Esophagus squamous epithelium (tissue), 5 donors: ENCODE measurements at regions of chr2 and their contacts with region 1.

Region 1: DNA sequence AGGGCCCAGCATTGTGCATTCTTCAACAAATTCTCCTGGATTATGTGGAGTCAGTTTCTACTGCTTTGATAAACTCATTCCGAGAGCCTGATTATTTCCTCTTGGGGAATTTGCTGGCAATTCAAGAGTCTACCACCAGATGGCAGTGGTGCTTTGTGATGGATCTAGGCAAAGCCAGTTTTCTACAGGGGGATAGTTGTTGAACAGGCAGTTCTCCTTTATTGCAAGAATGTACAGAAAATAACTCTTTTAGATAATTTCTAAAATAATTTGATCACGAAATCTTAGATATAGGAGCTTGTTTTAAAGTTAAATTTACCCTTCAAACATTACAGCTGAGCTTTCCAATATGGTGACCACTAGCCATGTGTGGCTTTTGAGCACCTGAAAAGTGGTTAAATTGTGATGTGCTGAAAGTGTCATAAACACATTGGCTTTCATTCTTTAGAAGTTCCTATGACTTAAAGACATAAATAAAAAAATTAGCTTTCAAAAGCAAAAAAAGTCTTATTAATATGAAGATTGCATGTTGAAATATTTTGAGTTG is 66.7 kb upstream of the HAAO start:
- DNase-seq: no peak
- H3K4me3 ChIP-seq: no peak overlapping the region
- H3K27ac ChIP-seq: peak overlapping the region in 3 of 4 donors; percentile 30 to 90 (median 83)
- H3K4me1 ChIP-seq: peaks cover 24 to 62% (median 31%) of the 10 kb centered on the region in 3 donors
- H3K27me3 ChIP-seq: no peaks in the 10 kb centered on the region
- CTCF ChIP-seq: peak; percentile 89 to 97 (median 93)
- POLR2A ChIP-seq: no peak

Region 2: DNA sequence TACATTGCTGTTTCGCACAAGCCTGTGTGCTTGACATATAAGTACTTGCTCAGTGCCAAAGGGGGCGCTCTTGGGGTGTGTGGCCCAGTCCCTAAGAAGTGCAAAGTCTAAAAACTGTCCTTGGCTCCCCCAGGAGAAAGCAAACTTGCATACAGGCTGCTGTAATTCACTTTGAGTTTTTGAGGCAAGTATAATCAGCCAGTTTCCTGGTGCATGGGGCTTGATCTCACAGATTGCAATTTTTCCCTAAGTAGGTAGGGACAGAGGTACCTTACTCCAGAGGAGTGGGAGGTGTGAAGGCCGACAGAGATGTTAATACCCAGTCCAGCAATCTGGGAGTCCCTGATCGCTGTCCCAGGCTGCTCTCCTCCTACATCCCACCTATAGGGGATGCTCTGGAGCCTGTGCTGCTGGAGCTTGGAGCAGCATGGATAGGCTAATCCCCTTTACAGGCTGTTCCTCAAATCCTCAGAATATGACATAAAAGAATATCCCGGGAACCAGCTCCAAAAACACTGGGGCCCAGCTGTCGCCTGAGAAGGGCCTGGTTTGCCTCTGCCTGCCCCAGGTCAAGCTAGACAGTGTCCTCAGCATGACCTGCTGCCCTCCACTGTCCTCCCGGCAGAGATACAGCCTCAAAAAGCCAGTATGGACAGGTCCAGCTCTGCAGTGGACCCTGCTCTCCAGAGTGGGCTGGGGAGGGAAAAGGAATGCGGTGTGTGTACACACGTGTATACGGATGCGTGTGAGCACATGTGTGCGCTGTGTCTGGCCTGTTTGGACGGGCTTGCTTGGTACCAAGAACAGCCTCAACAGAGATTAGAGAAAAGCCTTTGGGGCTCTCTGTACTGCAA is 69.8 kb after region 1 on chr2:
- intact Hi-C with region 1: loop called (anchors 5 kb)
- DNase-seq: no peak
- H3K4me3 ChIP-seq: no peak overlapping the region
- H3K27ac ChIP-seq: peak overlapping the region; percentile 77 to 93 (median 86)
- H3K4me1 ChIP-seq: peaks cover 79 to 100% (median 95%) of the 10 kb centered on the region in 3 donors
- H3K27me3 ChIP-seq: no peaks in the 10 kb centered on the region
- CTCF ChIP-seq: peak in 4 of 6 experiments; percentile 22 to 35 (median 26)
- POLR2A ChIP-seq: no peak